ENCODE measurements at regions of chr3 and their contacts with region 1.

Region 1: GRCh38 chr3:12810013-12810780 is 13.7 kb downstream of the CAND2 start:
- DNase-seq: peak; percentile 94
- H3K4me3 Mint-ChIP-seq: peak overlapping the region; percentile 63
- H3K27ac Mint-ChIP-seq: no peak overlapping the region
- H3K4me1 Mint-ChIP-seq: peaks cover 7% of the 10 kb centered on the region
- H3K27me3 Mint-ChIP-seq: peaks cover 3% of the 10 kb centered on the region

Region 2: GRCh38 chr3:12796171-12797123 is 13.8 kb before region 1 on chr3 and contains the start of gene CAND2:
- CTCF ChIA-PET with region 1: interaction called, 12 read pairs
- POLR2A ChIA-PET with region 1: no interaction called
- DNase-seq: peak; percentile 24
- H3K4me3 Mint-ChIP-seq: peak within 1 kb of the TSS; percentile 65
- H3K27ac Mint-ChIP-seq: no peak within 1 kb of the TSS
- H3K4me1 Mint-ChIP-seq: peaks cover 6% of the 10 kb centered on the region
- H3K27me3 Mint-ChIP-seq: peaks cover 22% of the 10 kb centered on the region
- total RNA-seq, gene CAND2: 0.84 to 0.98 TPM

Region 3: GRCh38 chr3:12822725-12823373 is 12.7 kb after region 1 on chr3:
- CTCF ChIA-PET with region 1: interaction called, 36 read pairs
- POLR2A ChIA-PET with region 1: no interaction called
- DNase-seq: no peak
- H3K4me3 Mint-ChIP-seq: no peak overlapping the region
- H3K27ac Mint-ChIP-seq: no peak overlapping the region
- H3K4me1 Mint-ChIP-seq: no peaks in the 10 kb centered on the region
- H3K27me3 Mint-ChIP-seq: no peaks in the 10 kb centered on the region

Region 4: GRCh38 chr3:12830785-12831156 is 20.6 kb after region 1 on chr3:
- CTCF ChIA-PET with region 1: interaction called, 15 read pairs
- POLR2A ChIA-PET with region 1: no interaction called
- DNase-seq: no peak
- H3K4me3 Mint-ChIP-seq: no peak overlapping the region
- H3K27ac Mint-ChIP-seq: no peak overlapping the region
- H3K4me1 Mint-ChIP-seq: no peaks in the 10 kb centered on the region
- H3K27me3 Mint-ChIP-seq: no peaks in the 10 kb centered on the region

Region 5: GRCh38 chr3:13119471-13120220 is 309.4 kb after region 1 on chr3:
- CTCF ChIA-PET with region 1: no interaction called
- POLR2A ChIA-PET with region 1: no interaction called
- DNase-seq: no peak
- H3K4me3 Mint-ChIP-seq: no peak overlapping the region
- H3K27ac Mint-ChIP-seq: no peak overlapping the region
- H3K4me1 Mint-ChIP-seq: no peaks in the 10 kb centered on the region
- H3K27me3 Mint-ChIP-seq: peaks cover 3% of the 10 kb centered on the region